ENCODE measurements at regions of chr15 and their contacts with region 1.

Region 1: DNA sequence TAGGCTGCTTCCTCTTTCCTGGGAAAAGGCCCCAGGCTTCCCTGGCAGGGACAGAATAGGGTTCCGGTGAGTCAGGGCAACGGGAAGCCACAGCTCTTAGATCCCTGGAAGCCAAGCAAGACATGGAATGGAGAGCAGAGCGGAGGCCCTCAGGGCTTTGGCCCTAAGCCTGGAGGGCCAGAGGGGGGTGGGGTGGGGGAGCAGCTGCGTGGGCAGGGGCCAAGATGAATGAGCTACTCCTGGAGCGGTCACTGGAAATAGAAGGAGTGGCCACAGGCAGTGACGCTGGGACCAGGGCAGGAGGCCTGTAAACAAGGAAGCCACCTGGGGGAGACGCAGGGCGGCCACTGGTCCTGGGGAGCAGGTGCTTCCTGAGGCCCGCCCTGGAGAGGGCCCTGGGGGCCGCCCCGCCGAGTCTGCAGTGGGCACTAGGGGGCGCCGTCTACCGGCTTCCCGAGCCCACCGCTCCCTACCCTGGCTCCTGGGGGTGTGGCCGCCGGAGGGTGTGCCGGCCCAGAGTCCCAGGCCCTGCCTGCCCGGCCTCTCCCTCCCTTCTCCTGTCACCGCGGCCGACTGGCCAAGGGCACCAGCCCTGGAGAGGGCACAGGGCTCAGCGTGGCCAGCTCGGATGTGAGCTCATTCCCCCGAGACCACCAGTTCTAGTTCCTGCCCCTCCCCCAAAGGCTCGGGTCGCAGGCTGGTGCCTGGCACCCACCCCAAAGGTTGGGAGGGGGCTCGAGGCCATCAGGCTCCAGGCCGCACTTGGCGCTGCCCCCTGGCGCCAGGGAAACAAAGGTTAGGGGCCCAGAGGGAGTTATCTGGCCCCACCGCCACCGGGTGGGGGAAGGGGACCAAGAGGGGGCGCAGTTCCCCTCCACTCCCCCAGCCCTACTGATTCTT is 12.1 kb downstream of the VPS18 start:
- DNase-seq: peak; percentile 64 to 68 (median 64)
- H3K4me3 ChIP-seq: peak overlapping the region; percentile 61 to 67
- H3K4me3 Mint-ChIP-seq: peak overlapping the region; percentile 42 to 88 (median 84)
- H3K27ac ChIP-seq: peak overlapping the region; percentile 58
- H3K27ac Mint-ChIP-seq: peak overlapping the region in 5 of 7 donors; percentile 70 to 91 (median 87)
- H3K4me1 ChIP-seq: peaks cover 20% of the 10 kb centered on the region
- H3K4me1 Mint-ChIP-seq: peaks cover 13 to 35% (median 24%) of the 10 kb centered on the region in 4 donors
- H3K27me3 ChIP-seq: no peaks in the 10 kb centered on the region
- H3K27me3 Mint-ChIP-seq: no peaks in the 10 kb centered on the region

Region 2: DNA sequence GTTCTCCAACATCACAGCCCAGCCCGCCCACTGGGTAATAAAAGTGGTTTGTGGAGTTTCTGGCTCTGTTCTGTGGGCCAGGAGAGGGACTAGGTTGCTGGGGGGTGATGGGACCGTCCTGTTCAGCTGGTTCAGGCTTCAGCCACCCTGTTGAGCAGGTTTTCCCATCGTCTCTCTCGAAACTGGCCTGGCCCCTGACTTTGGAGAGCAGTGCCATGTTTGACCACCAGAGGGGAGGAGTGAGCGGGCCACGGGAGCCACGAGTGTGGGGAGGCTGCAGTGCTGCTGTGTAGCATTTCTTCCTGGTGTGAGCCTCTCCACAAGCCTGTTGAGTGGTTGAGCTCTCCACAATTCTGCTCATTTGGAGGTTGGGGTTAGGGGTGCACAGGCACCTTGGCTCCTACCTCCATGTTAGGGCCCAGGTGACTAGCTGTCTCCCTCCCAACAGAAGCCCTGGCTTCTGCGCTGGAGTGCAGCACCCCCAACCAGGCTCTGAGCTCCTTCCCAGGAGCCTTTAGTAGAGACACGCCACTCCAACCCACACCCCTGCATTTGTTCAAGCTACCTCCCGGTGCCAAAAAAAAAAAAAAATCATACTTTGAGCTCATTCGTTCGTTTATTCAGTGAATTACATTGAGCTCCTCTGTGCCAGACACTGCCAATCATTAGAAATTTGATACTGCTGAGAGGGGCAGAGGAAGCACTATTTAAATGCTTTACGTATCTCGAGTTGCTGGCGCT is 48.6 kb before region 1 on chr15:
- CTCF ChIA-PET with region 1: interaction called, 51 read pairs
- POLR2A ChIA-PET with region 1: no interaction called
- intact Hi-C with region 1: no loop called
- DNase-seq: peak; percentile 72 to 82 (median 73)
- H3K4me3 ChIP-seq: no peak overlapping the region
- H3K4me3 Mint-ChIP-seq: no peak overlapping the region
- H3K27ac ChIP-seq: no peak overlapping the region
- H3K27ac Mint-ChIP-seq: peak overlapping the region in 1 of 7 donors; percentile 12
- H3K4me1 ChIP-seq: peaks cover 12% of the 10 kb centered on the region
- H3K4me1 Mint-ChIP-seq: peaks cover 6 to 20% (median 7%) of the 10 kb centered on the region in 4 donors
- H3K27me3 ChIP-seq: no peaks in the 10 kb centered on the region
- H3K27me3 Mint-ChIP-seq: peaks cover 1 to 4% of the 10 kb centered on the region in 2 donors

Region 3: GRCh38 chr15:40873625-40874561 is 32.4 kb before region 1 on chr15 and contains the start of gene RHOV:
- CTCF ChIA-PET with region 1: no interaction called
- POLR2A ChIA-PET with region 1: no interaction called
- intact Hi-C with region 1: no loop called
- DNase-seq: peak; percentile 31 to 62 (median 37)
- H3K4me3 ChIP-seq: peak within 1 kb of the TSS in 1 of 2 donors; percentile 44
- H3K4me3 Mint-ChIP-seq: peak within 1 kb of the TSS; percentile 78 to 93 (median 88)
- H3K27ac ChIP-seq: no peak within 1 kb of the TSS
- H3K27ac Mint-ChIP-seq: no peak within 1 kb of the TSS
- H3K4me1 ChIP-seq: peaks cover 6% of the 10 kb centered on the region
- H3K4me1 Mint-ChIP-seq: peaks cover 2 to 19% (median 8%) of the 10 kb centered on the region in 4 donors
- H3K27me3 ChIP-seq: no peaks in the 10 kb centered on the region
- H3K27me3 Mint-ChIP-seq: peaks cover 1% of the 10 kb centered on the region in 2 donors
- total RNA-seq, gene RHOV: not detected

Region 4: GRCh38 chr15:40941528-40942336 is 35.4 kb after region 1 on chr15:
- CTCF ChIA-PET with region 1: interaction called, 26 read pairs
- POLR2A ChIA-PET with region 1: interaction called, 37 read pairs
- intact Hi-C with region 1: loop called (anchors 2 kb)
- DNase-seq: peak; percentile 62 to 73 (median 67)
- H3K4me3 ChIP-seq: peak overlapping the region; percentile 58 to 83
- H3K4me3 Mint-ChIP-seq: peak overlapping the region; percentile 75 to 87 (median 84)
- H3K27ac ChIP-seq: peak overlapping the region; percentile 64
- H3K27ac Mint-ChIP-seq: peak overlapping the region in 6 of 7 donors; percentile 66 to 94 (median 87)
- H3K4me1 ChIP-seq: peaks cover 27% of the 10 kb centered on the region
- H3K4me1 Mint-ChIP-seq: peaks cover 13 to 40% (median 31%) of the 10 kb centered on the region in 4 donors
- H3K27me3 ChIP-seq: no peaks in the 10 kb centered on the region
- H3K27me3 Mint-ChIP-seq: no peaks in the 10 kb centered on the region

Region 5: GRCh38 chr15:41116116-41116871 is 210.0 kb after region 1 on chr15 and contains the start of gene INO80:
- CTCF ChIA-PET with region 1: interaction called, 4 read pairs
- POLR2A ChIA-PET with region 1: interaction called, 17 read pairs
- intact Hi-C with region 1: loop called (anchors 5 kb)
- DNase-seq: peak; percentile 96 to 97 (median 97)
- H3K4me3 ChIP-seq: peak within 1 kb of the TSS; percentile 95 to 100
- H3K4me3 Mint-ChIP-seq: peak within 1 kb of the TSS; percentile 93 to 99 (median 96)
- H3K27ac ChIP-seq: peak within 1 kb of the TSS; percentile 84
- H3K27ac Mint-ChIP-seq: peak within 1 kb of the TSS; percentile 87 to 100 (median 99)
- H3K4me1 ChIP-seq: peaks cover 31% of the 10 kb centered on the region
- H3K4me1 Mint-ChIP-seq: peaks cover 15 to 36% (median 26%) of the 10 kb centered on the region in 4 donors
- H3K27me3 ChIP-seq: no peaks in the 10 kb centered on the region
- H3K27me3 Mint-ChIP-seq: peaks cover 0 to 2% of the 10 kb centered on the region in 2 donors
- total RNA-seq, gene INO80: 29.7 to 34.4 TPM

Region 6: GRCh38 chr15:41283653-41284426 is 377.5 kb after region 1 on chr15:
- CTCF ChIA-PET with region 1: no interaction called
- POLR2A ChIA-PET with region 1: no interaction called
- intact Hi-C with region 1: loop called (anchors 5 kb)
- DNase-seq: peak; percentile 97 to 98 (median 98)
- H3K4me3 ChIP-seq: peak overlapping the region; percentile 91 to 97
- H3K4me3 Mint-ChIP-seq: peak overlapping the region; percentile 93 to 99 (median 98)
- H3K27ac ChIP-seq: peak overlapping the region; percentile 86
- H3K27ac Mint-ChIP-seq: peak overlapping the region; percentile 92 to 99 (median 99)
- H3K4me1 ChIP-seq: peaks cover 43% of the 10 kb centered on the region
- H3K4me1 Mint-ChIP-seq: peaks cover 28 to 53% (median 41%) of the 10 kb centered on the region in 4 donors
- H3K27me3 ChIP-seq: no peaks in the 10 kb centered on the region
- H3K27me3 Mint-ChIP-seq: no peaks in the 10 kb centered on the region

Measured in CD4-positive, alpha-beta memory T cell (primary cell).